ENCODE measurements at regions of chr13 and their contacts with region 1.

Region 1: DNA sequence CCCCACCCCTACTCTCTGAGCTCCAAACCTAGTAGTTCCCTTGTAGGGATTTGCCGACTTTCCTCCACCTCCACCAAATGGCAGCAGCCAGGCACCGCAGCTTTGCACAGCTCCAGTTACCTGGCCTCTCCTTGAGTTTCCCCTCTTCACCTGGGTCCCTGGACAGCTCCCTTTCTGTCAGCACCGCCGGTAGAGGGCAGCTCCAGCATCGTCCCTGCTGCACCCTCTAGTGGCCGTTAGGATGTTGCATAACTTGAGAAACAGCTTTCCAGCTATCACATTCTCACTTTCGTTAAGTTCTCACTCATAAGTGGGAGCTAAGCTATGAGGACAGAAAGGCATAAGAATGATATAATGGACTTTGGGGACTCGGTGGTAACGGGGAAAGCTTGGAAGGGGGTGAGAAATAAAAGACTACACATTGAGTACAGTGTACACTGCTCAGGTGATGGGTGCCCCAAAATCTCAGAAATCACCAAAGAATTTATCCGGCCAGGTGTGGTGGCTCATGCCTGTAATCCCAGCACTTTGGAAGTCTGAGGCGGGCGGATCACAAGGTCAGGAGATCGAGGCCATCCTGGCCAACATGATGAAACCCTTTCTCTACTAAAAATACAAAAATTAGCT is 60.4 kb upstream of the OLFM4 start:
- DNase-seq: peak; percentile 57 to 89 (median 76)
- H3K4me3 ChIP-seq: no peak overlapping the region
- H3K27ac ChIP-seq: no peak overlapping the region
- H3K4me1 ChIP-seq: no peaks in the 10 kb centered on the region
- H3K27me3 ChIP-seq: no peaks in the 10 kb centered on the region
- CTCF ChIP-seq: peak; percentile 71 to 95 (median 90)
- POLR2A ChIP-seq: no peak

Region 2: GRCh38 chr13:52599848-52600603 is 368.2 kb before region 1 on chr13:
- intact Hi-C with region 1: loop called in 1 of 2 experiments (anchors 10 kb)
- DNase-seq: peak in 3 of 7 donors; percentile 26 to 31 (median 26)
- H3K4me3 ChIP-seq: peak overlapping the region in 3 of 4 donors; percentile 24 to 81 (median 73)
- H3K27ac ChIP-seq: peak overlapping the region in 4 of 5 donors; percentile 36 to 62 (median 54)
- H3K4me1 ChIP-seq: no peaks in the 10 kb centered on the region
- H3K27me3 ChIP-seq: no peaks in the 10 kb centered on the region
- CTCF ChIP-seq: no peak
- POLR2A ChIP-seq: peak in 1 of 2 donors; percentile 10

Region 3: GRCh38 chr13:53079691-53080090 is 111.5 kb after region 1 on chr13:
- intact Hi-C with region 1: no loop called
- DNase-seq: no peak
- H3K4me3 ChIP-seq: no peak overlapping the region
- H3K27ac ChIP-seq: no peak overlapping the region
- H3K4me1 ChIP-seq: no peaks in the 10 kb centered on the region
- H3K27me3 ChIP-seq: no peaks in the 10 kb centered on the region
- CTCF ChIP-seq: no peak
- POLR2A ChIP-seq: no peak

Measured in adrenal gland (tissue), 19 donors.